ENCODE measurements at regions of chr11 and their contacts with region 1.

Region 1: GRCh38 chr11:67288452-67289225 is 464 bp upstream of the ANKRD13D start:
- DNase-seq: peak; percentile 95
- ATAC-seq: peak; percentile 62
- H3K4me3 Mint-ChIP-seq: peak overlapping the region; percentile 64
- H3K27ac Mint-ChIP-seq: peak overlapping the region; percentile 97
- H3K4me1 Mint-ChIP-seq: peaks cover 56% of the 10 kb centered on the region
- H3K27me3 Mint-ChIP-seq: no peaks in the 10 kb centered on the region

Region 2: DNA sequence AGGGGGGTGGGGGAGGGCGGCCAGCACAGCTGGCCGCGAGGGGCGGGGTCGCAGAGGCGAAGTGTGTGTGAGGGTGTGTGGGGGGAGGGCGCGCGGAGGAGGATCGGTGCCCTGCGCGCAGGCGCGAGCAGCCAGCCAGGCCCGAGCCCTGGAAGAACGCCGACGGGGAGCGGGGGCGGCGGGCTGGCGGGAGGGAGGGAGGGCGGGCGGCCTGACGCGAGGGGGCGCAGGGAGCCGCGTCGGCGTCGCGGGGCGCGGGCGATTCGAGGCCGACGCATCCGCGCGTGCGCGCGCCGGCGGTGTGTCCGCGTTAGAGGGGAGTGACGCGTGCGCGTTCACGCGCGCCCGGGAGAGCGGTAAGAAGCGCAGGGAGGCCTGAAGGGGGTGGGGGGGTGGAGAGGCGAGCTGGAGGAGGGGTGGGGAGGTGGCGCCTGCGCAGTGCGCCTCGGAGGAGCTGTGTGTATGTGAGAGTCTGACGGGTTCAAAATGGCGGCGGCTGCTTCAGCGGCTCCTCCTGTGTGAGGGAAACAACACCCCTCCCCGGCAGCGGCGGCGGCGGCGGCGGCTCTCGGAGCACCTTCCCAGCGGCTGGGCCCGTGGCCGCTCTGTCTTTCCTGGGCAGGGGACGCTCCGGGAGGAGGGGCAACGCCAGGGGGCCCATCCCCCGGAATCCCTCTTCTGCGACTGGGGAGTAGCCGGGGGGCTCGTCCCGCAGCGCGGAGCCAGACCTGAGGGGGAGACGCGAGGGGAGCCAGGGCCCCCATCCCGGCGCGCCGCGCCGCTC is 169.6 kb before region 1 on chr11 and contains the start of gene KDM2A:
- CTCF ChIA-PET with region 1: no interaction called
- POLR2A ChIA-PET with region 1: no interaction called
- intact Hi-C with region 1: loop called in 1 of 2 experiments (anchors 1 kb)
- DNase-seq: peak; percentile 100
- ATAC-seq: peak; percentile 85
- H3K4me3 Mint-ChIP-seq: peak within 1 kb of the TSS; percentile 98
- H3K27ac Mint-ChIP-seq: peak within 1 kb of the TSS; percentile 83
- H3K4me1 Mint-ChIP-seq: peaks cover 28% of the 10 kb centered on the region
- H3K27me3 Mint-ChIP-seq: no peaks in the 10 kb centered on the region
- total RNA-seq, gene KDM2A: 74.8 to 89.7 TPM

Region 3: DNA sequence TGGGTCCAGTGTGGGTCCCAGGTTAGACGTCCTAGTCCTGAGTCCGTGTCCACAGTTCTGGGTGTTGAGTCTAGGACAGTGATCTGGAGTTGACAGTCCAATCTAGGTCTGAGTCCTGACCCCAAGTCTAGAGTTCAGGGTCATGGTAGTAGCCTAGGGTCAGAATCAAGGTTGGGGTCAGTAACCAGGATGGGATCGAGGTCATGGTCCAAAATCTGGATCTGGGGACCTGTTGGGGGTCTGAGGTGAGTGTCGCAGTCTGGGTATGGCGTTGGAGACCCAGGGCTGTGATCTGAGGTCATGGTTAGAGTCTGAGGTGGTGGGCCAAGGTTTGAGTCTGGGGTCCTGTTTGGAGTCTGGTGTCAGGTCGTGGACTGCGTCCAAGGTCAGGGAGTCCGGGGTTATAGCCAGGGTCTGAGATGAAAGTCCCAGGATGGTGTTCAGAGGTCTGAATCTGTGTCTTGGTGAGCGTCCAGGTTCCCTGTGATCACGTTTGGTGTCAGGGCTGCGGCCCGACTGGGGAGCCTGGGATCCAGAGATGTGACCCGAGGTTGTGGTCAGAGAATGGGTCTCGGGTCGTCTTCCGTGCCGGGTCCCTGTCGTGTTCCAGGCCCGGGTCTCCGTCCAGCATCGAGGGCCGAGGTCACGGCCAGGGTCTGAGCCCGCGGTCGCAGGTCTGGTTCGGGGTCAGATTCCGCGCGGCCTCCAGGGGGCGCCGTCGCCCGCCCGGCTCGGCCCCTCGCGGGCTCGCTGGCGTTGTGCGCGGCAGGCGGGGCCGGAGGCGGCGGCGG is 22.8 kb before region 1 on chr11:
- CTCF ChIA-PET with region 1: interaction called, 9 read pairs
- POLR2A ChIA-PET with region 1: interaction called, 4 read pairs
- intact Hi-C with region 1: loop called (anchors 1 kb)
- DNase-seq: peak; percentile 87
- ATAC-seq: peak; percentile 18
- H3K4me3 Mint-ChIP-seq: peak overlapping the region; percentile 72
- H3K27ac Mint-ChIP-seq: peak overlapping the region; percentile 90
- H3K4me1 Mint-ChIP-seq: peaks cover 78% of the 10 kb centered on the region
- H3K27me3 Mint-ChIP-seq: no peaks in the 10 kb centered on the region

Region 4: GRCh38 chr11:67277231-67277961 is 11.2 kb before region 1 on chr11:
- CTCF ChIA-PET with region 1: interaction called, 10 read pairs
- POLR2A ChIA-PET with region 1: interaction called, 16 read pairs
- intact Hi-C with region 1: loop called (anchors 1 kb)
- DNase-seq: peak; percentile 95
- ATAC-seq: peak; percentile 88
- H3K4me3 Mint-ChIP-seq: peak overlapping the region; percentile 76
- H3K27ac Mint-ChIP-seq: peak overlapping the region; percentile 99
- H3K4me1 Mint-ChIP-seq: peaks cover 68% of the 10 kb centered on the region
- H3K27me3 Mint-ChIP-seq: no peaks in the 10 kb centered on the region

Region 5: GRCh38 chr11:67391304-67392132 is 102.9 kb after region 1 on chr11 and contains the start of gene RAD9A:
- CTCF ChIA-PET with region 1: no interaction called
- POLR2A ChIA-PET with region 1: no interaction called
- intact Hi-C with region 1: no loop called
- DNase-seq: peak; percentile 97
- ATAC-seq: peak; percentile 74
- H3K4me3 Mint-ChIP-seq: peak within 1 kb of the TSS; percentile 89
- H3K27ac Mint-ChIP-seq: peak within 1 kb of the TSS; percentile 80
- H3K4me1 Mint-ChIP-seq: peaks cover 34% of the 10 kb centered on the region
- H3K27me3 Mint-ChIP-seq: no peaks in the 10 kb centered on the region
- total RNA-seq, gene RAD9A: 28.8 to 30.0 TPM

Region 6: GRCh38 chr11:67401495-67402191 is 113.0 kb after region 1 on chr11 and contains the start of gene PPP1CA:
- CTCF ChIA-PET with region 1: no interaction called
- POLR2A ChIA-PET with region 1: no interaction called
- intact Hi-C with region 1: loop called in 1 of 2 experiments (anchors 1 kb)
- DNase-seq: peak; percentile 97
- ATAC-seq: peak; percentile 67
- H3K4me3 Mint-ChIP-seq: peak within 1 kb of the TSS; percentile 82
- H3K27ac Mint-ChIP-seq: peak within 1 kb of the TSS; percentile 87
- H3K4me1 Mint-ChIP-seq: peaks cover 52% of the 10 kb centered on the region
- H3K27me3 Mint-ChIP-seq: no peaks in the 10 kb centered on the region
- total RNA-seq, gene PPP1CA: 199 to 227 TPM

Region 7: GRCh38 chr11:67468835-67469811 is 180.5 kb after region 1 on chr11 and contains the start of gene TMEM134:
- CTCF ChIA-PET with region 1: interaction called, 4 read pairs
- POLR2A ChIA-PET with region 1: no interaction called
- intact Hi-C with region 1: loop called in 1 of 2 experiments (anchors 1 kb)
- DNase-seq: peak; percentile 97
- ATAC-seq: peak; percentile 78
- H3K4me3 Mint-ChIP-seq: peak within 1 kb of the TSS; percentile 82
- H3K27ac Mint-ChIP-seq: peak within 1 kb of the TSS; percentile 86
- H3K4me1 Mint-ChIP-seq: peaks cover 23% of the 10 kb centered on the region
- H3K27me3 Mint-ChIP-seq: no peaks in the 10 kb centered on the region
- total RNA-seq, gene TMEM134: 69.9 to 74.7 TPM

Region 8: GRCh38 chr11:67583247-67584204 is 294.9 kb after region 1 on chr11 and contains the start of gene GSTP1:
- CTCF ChIA-PET with region 1: no interaction called
- POLR2A ChIA-PET with region 1: no interaction called
- intact Hi-C with region 1: loop called in 1 of 2 experiments (anchors 5 kb)
- DNase-seq: peak; percentile 90
- ATAC-seq: peak; percentile 85
- H3K4me3 Mint-ChIP-seq: peak within 1 kb of the TSS; percentile 89
- H3K27ac Mint-ChIP-seq: peak within 1 kb of the TSS; percentile 94
- H3K4me1 Mint-ChIP-seq: peaks cover 52% of the 10 kb centered on the region
- H3K27me3 Mint-ChIP-seq: peaks cover 10% of the 10 kb centered on the region
- total RNA-seq, gene GSTP1: 376 to 463 TPM

Measured in activated CD4-positive, alpha-beta T cell treated with anti-CD3 and anti-CD28 coated beads for 36 hours (primary cell).